Activated CD4-positive, alpha-beta T cell treated with anti-CD3 and anti-CD28 coated beads, Interleukin-2, amount 10 ng/mL, durations not matched to agents 7 days and 5 days (primary cell): ENCODE measurements at regions of chr7 and their contacts with region 1.

Region 1: DNA sequence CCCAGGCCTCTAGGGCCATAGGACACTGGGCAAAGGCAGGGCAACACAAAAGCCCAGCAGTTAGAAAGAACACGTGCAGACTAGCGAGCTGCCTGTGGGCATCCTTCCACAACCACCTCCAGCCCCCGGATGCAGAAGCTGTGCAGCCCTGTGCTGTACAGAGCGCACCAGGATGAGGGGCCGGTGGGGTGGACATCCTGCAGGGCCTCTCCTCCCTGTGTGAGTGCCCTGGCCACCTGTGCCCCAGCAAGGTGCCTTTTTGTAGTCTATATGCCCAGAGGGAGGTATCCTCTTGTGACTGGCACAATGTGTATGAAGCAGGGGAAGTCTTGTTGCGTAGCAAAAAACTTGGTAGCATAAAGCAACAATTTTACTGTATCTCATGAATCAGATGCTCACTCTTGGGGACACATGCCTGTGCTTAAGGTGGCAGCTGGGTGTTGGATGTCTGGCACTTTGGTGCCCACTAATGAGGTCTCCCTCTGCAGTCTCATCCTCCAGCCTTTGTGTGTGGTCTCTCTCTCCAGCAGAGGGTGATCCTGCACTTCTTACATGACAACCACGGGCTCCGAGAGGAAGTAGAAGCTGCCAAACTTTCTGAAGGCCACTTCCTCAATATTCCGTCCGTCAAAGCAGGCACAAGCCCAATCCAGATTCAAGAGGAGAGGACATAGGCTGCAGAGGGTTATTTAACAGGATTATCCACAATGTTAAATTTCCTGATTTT is 8.7 kb downstream of the NCAPG2 start:
- DNase-seq: peak; percentile 57
- H3K4me3 Mint-ChIP-seq: no peak overlapping the region
- H3K27ac Mint-ChIP-seq: peak overlapping the region; percentile 83
- H3K4me1 Mint-ChIP-seq: peaks cover 59% of the 10 kb centered on the region
- H3K27me3 Mint-ChIP-seq: no peaks in the 10 kb centered on the region

Region 2: GRCh38 chr7:158976849-158977593 is 281.1 kb after region 1 on chr7:
- CTCF ChIA-PET with region 1: interaction called, 24 read pairs
- POLR2A ChIA-PET with region 1: no interaction called
- DNase-seq: peak; percentile 89
- H3K4me3 Mint-ChIP-seq: peak overlapping the region; percentile 71
- H3K27ac Mint-ChIP-seq: peak overlapping the region; percentile 78
- H3K4me1 Mint-ChIP-seq: peaks cover 21% of the 10 kb centered on the region
- H3K27me3 Mint-ChIP-seq: no peaks in the 10 kb centered on the region